Endothelial cell of umbilical vein (primary cell): ENCODE measurements at regions of chr4 and their contacts with region 1.

Region 1: GRCh38 chr4:10063544-10064300 is 42.4 kb upstream of the SLC2A9 start:
- DNase-seq: peak; percentile 82
- H3K4me3 ChIP-seq: no peak overlapping the region
- H3K27ac ChIP-seq: no peak overlapping the region
- H3K4me1 ChIP-seq: no peaks in the 10 kb centered on the region
- H3K27me3 ChIP-seq: no peaks in the 10 kb centered on the region
- CTCF ChIP-seq: peak; percentile 40 to 70
- POLR2A ChIP-seq: no peak

Region 2: DNA sequence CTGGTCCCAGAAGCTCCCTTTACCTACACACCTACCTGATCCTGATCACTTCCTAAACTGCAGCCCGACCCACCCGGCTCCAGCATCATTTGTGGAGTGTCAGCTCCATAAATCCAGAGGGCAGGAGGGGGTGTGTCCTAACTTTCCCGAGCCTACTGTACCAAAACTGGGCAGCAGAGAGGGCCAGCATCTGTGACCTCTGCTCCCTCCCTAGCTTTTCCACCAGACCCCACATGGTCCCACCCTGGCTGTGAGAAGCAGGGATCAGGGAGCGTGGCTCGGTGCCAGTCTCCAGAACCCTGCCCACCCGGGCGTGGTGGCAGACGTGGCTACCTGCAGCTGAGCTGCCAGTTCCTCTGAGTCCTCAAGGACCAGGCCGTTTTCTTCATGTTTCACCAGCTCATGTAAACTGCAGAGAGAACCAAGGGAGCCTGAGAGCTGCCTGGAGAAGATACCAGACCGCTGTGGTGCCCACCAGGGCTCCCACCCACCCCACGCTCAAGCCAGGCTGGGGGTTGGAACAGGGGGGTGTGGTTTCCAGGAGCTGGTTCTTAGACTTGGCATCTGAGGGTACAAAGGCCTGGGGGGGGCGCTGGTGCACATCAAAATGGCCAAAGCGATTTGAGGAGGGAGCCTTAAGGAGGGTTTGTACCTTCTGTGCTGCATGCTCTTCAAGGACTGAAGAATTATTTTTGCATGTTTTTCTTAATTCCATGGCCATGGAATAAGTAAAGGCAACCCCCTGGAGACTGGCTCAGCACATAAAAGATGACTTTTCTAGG is 359.0 kb before region 1 on chr4:
- CTCF ChIA-PET with region 1: interaction called, 25 read pairs
- POLR2A ChIA-PET with region 1: interaction called, 3 read pairs
- dilution Hi-C with region 1: no loop called
- intact Hi-C with region 1: loop called (anchors 2 kb)
- DNase-seq: no peak
- H3K4me3 ChIP-seq: no peak overlapping the region
- H3K27ac ChIP-seq: no peak overlapping the region
- H3K4me1 ChIP-seq: no peaks in the 10 kb centered on the region
- H3K27me3 ChIP-seq: no peaks in the 10 kb centered on the region
- CTCF ChIP-seq: no peak
- POLR2A ChIP-seq: no peak

Region 3: GRCh38 chr4:9762823-9763475 is 300.8 kb before region 1 on chr4:
- CTCF ChIA-PET with region 1: interaction called, 19 read pairs
- POLR2A ChIA-PET with region 1: no interaction called
- dilution Hi-C with region 1: no loop called
- intact Hi-C with region 1: loop called (anchors 1 kb)
- DNase-seq: peak; percentile 56
- H3K4me3 ChIP-seq: no peak overlapping the region
- H3K27ac ChIP-seq: no peak overlapping the region
- H3K4me1 ChIP-seq: no peaks in the 10 kb centered on the region
- H3K27me3 ChIP-seq: no peaks in the 10 kb centered on the region
- CTCF ChIP-seq: peak; percentile 41 to 60
- POLR2A ChIP-seq: no peak

Region 4: DNA sequence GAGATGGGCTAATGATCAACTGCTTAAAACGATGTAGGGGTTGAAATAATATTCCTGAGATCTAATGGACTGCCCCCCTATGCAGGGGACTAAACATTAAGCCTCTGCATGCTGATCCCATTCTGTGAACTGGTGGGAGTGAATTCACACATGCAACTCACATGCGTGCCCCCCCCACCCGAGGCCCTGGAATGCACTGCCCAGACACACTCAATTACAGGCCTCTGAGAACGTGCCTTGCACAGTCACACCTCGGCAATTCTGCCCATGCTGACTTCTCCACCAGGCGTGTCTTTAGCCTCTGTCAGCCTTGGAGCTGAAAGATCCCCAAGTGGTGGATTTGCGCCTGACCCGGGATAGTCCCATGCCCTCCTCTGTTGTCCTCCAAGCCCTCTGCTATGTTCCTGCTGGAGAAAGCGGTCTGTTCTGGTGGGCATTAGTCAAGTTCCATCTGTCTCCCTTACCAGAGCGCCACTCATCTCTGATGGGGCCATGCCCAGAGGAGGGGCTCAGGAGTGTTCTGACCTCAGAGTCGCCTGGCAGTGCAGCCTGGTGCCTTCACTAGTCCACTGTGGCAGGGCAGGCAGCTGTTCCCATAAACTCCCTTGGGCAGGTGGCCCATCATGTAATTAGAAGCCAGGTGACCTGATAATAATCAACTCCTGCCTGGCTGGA is 195.8 kb before region 1 on chr4:
- CTCF ChIA-PET with region 1: no interaction called
- POLR2A ChIA-PET with region 1: no interaction called
- dilution Hi-C with region 1: no loop called
- intact Hi-C with region 1: no loop called
- DNase-seq: no peak
- H3K4me3 ChIP-seq: no peak overlapping the region
- H3K27ac ChIP-seq: no peak overlapping the region
- H3K4me1 ChIP-seq: no peaks in the 10 kb centered on the region
- H3K27me3 ChIP-seq: no peaks in the 10 kb centered on the region
- CTCF ChIP-seq: no peak
- POLR2A ChIP-seq: no peak

Region 5: DNA sequence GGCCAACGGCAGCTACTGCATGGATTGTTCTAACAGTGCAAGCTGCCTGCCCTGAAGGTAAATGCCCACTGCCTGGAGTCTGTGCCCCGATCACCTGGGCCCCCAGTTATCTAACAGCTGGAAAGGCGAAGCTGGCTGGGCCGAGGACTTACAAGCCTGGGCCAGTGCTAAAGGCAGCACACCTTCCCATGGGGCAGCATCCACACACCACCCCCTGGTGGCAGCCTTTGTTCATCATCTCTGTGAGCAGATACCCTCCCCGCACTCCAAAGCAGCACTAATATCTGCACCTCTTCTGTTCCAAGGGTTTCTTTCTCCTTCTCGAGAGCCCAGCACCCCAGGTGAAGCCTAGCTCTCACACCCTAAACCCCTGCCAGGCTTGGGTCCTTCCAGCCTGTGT is 50.0 kb before region 1 on chr4:
- CTCF ChIA-PET with region 1: interaction called, 24 read pairs
- POLR2A ChIA-PET with region 1: no interaction called
- dilution Hi-C with region 1: no loop called
- intact Hi-C with region 1: no loop called
- DNase-seq: peak; percentile 32
- H3K4me3 ChIP-seq: no peak overlapping the region
- H3K27ac ChIP-seq: no peak overlapping the region
- H3K4me1 ChIP-seq: no peaks in the 10 kb centered on the region
- H3K27me3 ChIP-seq: peaks cover 0 to 2% of the 10 kb centered on the region in 2 experiments
- CTCF ChIP-seq: peak; percentile 33 to 71
- POLR2A ChIP-seq: no peak

Region 6: GRCh38 chr4:10018818-10019461 is 44.8 kb before region 1 on chr4:
- CTCF ChIA-PET with region 1: interaction called, 24 read pairs
- POLR2A ChIA-PET with region 1: no interaction called
- dilution Hi-C with region 1: no loop called
- intact Hi-C with region 1: loop called (anchors 1 kb)
- DNase-seq: peak; percentile 95
- H3K4me3 ChIP-seq: peak overlapping the region in 2 of 3 experiments; percentile 25 to 27
- H3K27ac ChIP-seq: peak overlapping the region; percentile 50
- H3K4me1 ChIP-seq: peaks cover 6% of the 10 kb centered on the region
- H3K27me3 ChIP-seq: no peaks in the 10 kb centered on the region
- CTCF ChIP-seq: peak; percentile 100
- POLR2A ChIP-seq: peak; percentile 75

Region 7: DNA sequence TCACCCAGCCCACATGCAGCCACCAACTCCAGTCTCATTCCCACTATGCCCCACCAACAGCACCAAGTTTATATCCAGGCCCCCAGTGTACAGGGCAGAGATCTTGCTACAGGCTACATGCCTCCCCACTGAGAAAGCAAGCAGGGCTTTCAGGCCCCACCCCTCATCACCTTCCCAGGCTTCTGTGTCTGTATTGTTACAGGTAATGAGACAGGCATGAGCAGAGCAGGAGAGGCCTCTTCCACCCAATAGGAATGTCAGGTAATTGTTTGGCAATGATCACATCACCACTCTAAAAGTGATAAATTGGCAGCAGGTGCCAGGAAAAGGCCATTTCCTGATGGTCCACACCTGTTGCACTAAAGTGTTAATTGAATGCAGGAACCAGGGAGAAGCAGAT is 291.0 kb after region 1 on chr4:
- CTCF ChIA-PET with region 1: no interaction called
- POLR2A ChIA-PET with region 1: no interaction called
- dilution Hi-C with region 1: no loop called
- intact Hi-C with region 1: no loop called
- DNase-seq: no peak
- H3K4me3 ChIP-seq: no peak overlapping the region
- H3K27ac ChIP-seq: no peak overlapping the region
- H3K4me1 ChIP-seq: no peaks in the 10 kb centered on the region
- H3K27me3 ChIP-seq: no peaks in the 10 kb centered on the region
- CTCF ChIP-seq: no peak
- POLR2A ChIP-seq: no peak